ENCODE measurements at regions of chr2 and their contacts with region 1.

Region 1: GRCh38 chr2:26764078-26764887 is at the start of gene SLC35F6:
- DNase-seq: no peak
- ATAC-seq: peak; percentile 93
- H3K4me3 ChIP-seq: peak within 1 kb of the TSS; percentile 98 to 99
- H3K27ac ChIP-seq: peak within 1 kb of the TSS; percentile 98
- H3K4me1 ChIP-seq: peaks cover 49% of the 10 kb centered on the region
- H3K27me3 ChIP-seq: no peaks in the 10 kb centered on the region
- CTCF ChIP-seq: no peak
- total RNA-seq, gene SLC35F6: 67.3 TPM

Region 2: DNA sequence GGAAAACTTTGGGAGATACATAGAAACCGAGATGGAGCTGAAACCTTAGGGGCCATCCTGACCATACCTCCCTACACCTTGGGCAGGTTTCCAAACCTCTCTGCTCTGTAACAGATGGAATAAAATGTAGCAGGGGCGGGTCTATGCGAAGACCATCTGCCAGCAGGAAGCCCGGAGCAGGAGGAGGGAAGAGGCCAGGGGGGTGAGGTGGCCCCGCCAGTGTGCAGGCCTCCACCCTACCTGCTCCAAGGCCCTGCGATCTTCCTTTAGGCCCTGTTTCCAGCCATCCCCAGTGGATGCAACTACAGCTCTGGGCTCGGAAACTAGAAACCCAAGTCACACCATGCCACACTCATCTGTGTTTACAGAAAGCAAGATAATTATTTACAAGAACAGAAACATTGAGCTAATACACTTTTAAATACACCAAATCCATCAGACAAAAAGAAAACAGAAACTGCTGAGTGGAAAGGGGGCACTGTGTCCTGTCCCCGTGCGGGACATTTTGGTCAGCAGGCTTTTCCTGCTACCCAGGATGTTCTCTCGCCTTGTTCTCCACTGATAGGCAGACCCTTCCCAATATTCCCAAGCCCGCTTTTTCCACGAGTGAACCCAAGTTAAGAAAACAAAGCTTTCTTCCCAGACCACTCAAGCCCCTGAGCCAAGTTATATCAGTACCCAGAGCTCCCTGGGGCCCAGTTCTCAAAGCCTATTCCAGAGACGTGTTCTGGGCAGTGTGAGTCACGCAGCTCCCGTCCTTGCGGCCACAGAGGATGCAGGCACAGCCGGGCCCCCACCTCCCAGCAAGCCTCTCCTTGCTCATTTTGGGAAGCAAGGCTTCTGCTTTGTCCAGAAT is 140.5 kb before region 1 on chr2:
- CTCF ChIA-PET with region 1: no interaction called
- POLR2A ChIA-PET with region 1: interaction called, 15 read pairs
- in situ Hi-C with region 1: no loop called
- intact Hi-C with region 1: no loop called
- DNase-seq: no peak
- ATAC-seq: no peak
- H3K4me3 ChIP-seq: no peak overlapping the region
- H3K27ac ChIP-seq: no peak overlapping the region
- H3K4me1 ChIP-seq: 0 out of 2 replicates have a peak, but pooled peaks cover 2% of the 10 kb centered on the region
- H3K27me3 ChIP-seq: no peaks in the 10 kb centered on the region
- CTCF ChIP-seq: no peak

Region 3: GRCh38 chr2:26775433-26775832 is 11.2 kb after region 1 on chr2:
- CTCF ChIA-PET with region 1: no interaction called
- POLR2A ChIA-PET with region 1: interaction called, 10 read pairs
- in situ Hi-C with region 1: no loop called
- intact Hi-C with region 1: no loop called
- DNase-seq: no peak
- ATAC-seq: no peak
- H3K4me3 ChIP-seq: no peak overlapping the region
- H3K27ac ChIP-seq: no peak overlapping the region
- H3K4me1 ChIP-seq: peaks cover 27% of the 10 kb centered on the region
- H3K27me3 ChIP-seq: no peaks in the 10 kb centered on the region
- CTCF ChIP-seq: no peak

Measured in Panc1 (cell line).